Heart left ventricle (tissue), 16 donors: ENCODE measurements at regions of chr22 and their contacts with region 1.

Region 1: DNA sequence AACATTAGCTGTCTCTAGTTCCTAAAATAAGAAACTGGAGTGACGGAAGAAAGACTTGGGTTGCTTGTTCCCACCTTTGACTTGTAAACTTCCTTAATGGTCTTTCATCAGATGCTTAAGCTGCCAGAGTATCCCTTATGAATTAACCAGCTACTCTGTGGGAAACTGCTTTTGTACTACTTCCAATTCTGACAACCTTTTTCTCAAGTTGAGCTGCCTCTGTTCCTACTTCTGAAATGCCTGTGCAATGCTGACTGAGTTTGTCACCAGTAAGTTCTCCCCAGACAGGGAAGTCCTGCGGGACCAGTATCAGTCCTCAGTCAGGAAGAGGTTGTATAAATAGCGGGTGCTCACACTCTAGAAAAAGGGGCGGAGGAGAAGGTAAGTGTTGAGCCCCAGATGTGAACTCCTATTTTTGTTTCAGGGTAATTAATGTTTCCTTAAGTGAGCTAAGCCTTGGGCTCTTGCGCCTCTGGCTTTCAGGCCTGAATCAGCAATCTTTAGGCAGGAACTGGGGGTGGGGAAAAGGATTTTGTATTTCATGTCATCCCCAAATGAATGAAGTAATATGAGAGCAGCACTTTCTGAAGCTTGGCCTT is 67.2 kb downstream of the CECR2 start:
- DNase-seq: no peak
- ATAC-seq: peak; percentile 42 to 55 (median 44)
- H3K4me3 ChIP-seq: peak overlapping the region in 1 of 12 donors; percentile 3
- H3K27ac ChIP-seq: peak overlapping the region in 3 of 12 donors; percentile 9 to 37 (median 9)
- H3K4me1 ChIP-seq: peaks cover 0 to 29% (median 9%) of the 10 kb centered on the region in 12 donors
- H3K27me3 ChIP-seq: no peaks in the 10 kb centered on the region
- CTCF ChIP-seq: peak in 3 of 12 donors; percentile 12 to 13 (median 13)
- POLR2A ChIP-seq: no peak

Region 2: DNA sequence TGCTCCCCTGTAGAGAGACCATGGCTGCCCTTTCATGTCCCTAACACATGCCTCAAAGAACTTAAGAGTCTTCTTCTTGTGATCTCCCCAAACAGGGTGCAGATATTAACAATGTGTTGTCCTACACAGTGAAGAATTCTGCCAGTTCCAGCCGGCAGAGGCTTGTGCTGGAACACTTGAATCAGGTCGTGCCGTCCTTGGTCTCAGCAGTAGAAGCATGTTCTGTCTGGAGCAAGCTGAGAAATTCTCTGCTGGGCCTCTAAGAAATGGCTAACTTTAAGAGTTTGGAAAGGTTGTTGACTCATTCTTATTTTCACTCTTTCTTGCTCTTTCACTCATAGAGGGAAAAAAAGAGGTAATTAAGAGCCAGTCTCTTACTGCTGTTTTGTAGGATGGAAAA is 55.8 kb after region 1 on chr22:
- intact Hi-C with region 1: loop called in 1 of 10 experiments (anchors 10 kb)
- DNase-seq: peak in 2 of 5 donors; percentile 39 to 54
- ATAC-seq: peak; percentile 80 to 85 (median 81)
- H3K4me3 ChIP-seq: no peak overlapping the region
- H3K27ac ChIP-seq: peak overlapping the region in 8 of 12 donors; percentile 6 to 62 (median 25)
- H3K4me1 ChIP-seq: peaks cover 0 to 19% (median 8%) of the 10 kb centered on the region in 12 donors
- H3K27me3 ChIP-seq: no peaks in the 10 kb centered on the region
- CTCF ChIP-seq: no peak
- POLR2A ChIP-seq: no peak

Region 3: GRCh38 chr22:17514084-17514483 is 77.6 kb after region 1 on chr22:
- intact Hi-C with region 1: no loop called
- DNase-seq: peak in 3 of 5 donors; percentile 34 to 81 (median 65)
- ATAC-seq: peak; percentile 88 to 93 (median 90)
- H3K4me3 ChIP-seq: no peak overlapping the region
- H3K27ac ChIP-seq: peak overlapping the region in 10 of 12 donors; percentile 8 to 77 (median 52)
- H3K4me1 ChIP-seq: peaks cover 0 to 12% (median 0%) of the 10 kb centered on the region in 12 donors
- H3K27me3 ChIP-seq: no peaks in the 10 kb centered on the region
- CTCF ChIP-seq: no peak
- POLR2A ChIP-seq: no peak